MCF 10A (cell line): ENCODE measurements at regions of chr18 and their contacts with region 1.

Region 1: DNA sequence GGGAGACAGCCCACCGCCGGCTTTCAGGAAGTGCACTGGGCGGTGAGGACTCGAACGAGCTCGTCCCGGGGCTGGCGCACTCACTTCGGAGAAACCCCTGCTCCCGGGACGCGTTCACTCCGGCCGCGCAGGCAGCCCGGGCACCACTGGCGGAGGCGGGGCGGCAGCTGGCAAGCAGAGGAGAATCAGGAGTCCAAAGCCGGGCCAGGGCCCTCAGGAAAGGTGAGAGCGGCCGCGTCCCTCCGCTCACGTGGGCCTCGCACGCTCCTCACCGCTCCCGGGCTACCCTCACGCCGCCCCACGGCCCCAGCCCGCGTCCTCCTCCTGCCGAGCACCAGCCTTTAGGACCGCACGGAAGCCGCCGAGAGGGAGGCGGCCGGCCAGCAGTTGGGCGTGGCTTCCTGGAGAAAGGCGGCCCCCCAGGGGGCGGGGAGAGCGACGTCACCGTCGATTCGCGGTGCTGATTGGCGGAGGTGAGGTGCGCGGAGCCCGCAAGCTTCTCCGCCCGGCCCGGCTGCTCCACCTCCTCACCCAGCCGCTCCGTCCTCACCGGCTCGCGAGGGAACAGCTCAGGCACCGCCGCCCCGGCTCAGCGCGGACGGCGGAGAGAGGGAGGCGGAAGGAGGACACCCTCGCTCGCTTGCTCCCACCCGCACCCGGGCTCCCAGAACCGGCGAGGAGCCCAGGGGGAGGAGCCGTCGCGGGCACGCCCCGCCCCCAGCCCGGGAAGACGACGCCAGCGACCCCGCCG is at the start of gene ZCCHC2:
- DNase-seq: peak; percentile 96
- H3K4me3 Mint-ChIP-seq: peak within 1 kb of the TSS; percentile 76
- H3K27ac Mint-ChIP-seq: peak within 1 kb of the TSS; percentile 58
- H3K4me1 Mint-ChIP-seq: peaks cover 13% of the 10 kb centered on the region
- H3K27me3 Mint-ChIP-seq: no peaks in the 10 kb centered on the region
- CTCF ChIP-seq: no peak
- total RNA-seq, gene ZCCHC2: 14.6 and 15.0 TPM in 2 replicates

Region 2: DNA sequence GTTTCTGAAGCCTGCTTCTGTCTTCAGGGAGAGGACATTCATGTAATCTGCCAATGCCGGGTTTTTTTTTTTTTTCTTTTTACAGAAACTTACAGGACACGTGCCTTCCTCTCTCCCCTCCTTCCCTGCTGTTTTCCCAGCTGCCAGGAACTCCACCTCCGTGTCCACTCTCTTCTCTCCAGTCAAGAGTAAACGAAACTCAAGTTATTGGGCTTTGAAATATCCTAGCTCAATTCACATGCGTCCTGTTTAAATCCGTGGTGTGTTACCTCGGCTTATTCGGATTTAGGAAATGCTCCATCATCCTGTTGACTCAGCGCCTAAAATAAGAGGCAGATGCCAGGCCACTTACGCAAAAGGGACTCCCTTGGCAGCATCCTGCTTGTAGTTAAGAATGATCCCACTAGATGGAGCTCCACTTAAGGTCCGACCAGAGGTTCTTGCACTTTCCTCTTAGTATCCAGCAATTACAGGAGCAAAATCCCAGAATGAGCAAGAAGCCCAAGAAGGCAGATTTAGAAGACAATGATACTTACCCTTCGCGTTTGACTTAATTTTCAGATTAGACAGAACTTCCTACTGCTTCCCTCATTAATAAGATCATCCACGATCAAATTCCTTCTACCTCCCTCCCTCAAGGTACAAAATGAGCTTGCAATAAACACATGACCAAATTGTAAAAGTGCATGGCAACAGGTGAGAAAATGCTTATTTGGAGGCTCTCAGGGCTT is 97.0 kb before region 1 on chr18:
- CTCF ChIA-PET with region 1: interaction called, 14 read pairs
- POLR2A ChIA-PET with region 1: interaction called, 78 read pairs
- intact Hi-C with region 1: loop called (anchors 1 kb)
- DNase-seq: peak; percentile 97
- H3K4me3 Mint-ChIP-seq: peak overlapping the region; percentile 65
- H3K27ac Mint-ChIP-seq: peak overlapping the region; percentile 90
- H3K4me1 Mint-ChIP-seq: peaks cover 21% of the 10 kb centered on the region
- H3K27me3 Mint-ChIP-seq: no peaks in the 10 kb centered on the region
- CTCF ChIP-seq: peak; percentile 91

Region 3: DNA sequence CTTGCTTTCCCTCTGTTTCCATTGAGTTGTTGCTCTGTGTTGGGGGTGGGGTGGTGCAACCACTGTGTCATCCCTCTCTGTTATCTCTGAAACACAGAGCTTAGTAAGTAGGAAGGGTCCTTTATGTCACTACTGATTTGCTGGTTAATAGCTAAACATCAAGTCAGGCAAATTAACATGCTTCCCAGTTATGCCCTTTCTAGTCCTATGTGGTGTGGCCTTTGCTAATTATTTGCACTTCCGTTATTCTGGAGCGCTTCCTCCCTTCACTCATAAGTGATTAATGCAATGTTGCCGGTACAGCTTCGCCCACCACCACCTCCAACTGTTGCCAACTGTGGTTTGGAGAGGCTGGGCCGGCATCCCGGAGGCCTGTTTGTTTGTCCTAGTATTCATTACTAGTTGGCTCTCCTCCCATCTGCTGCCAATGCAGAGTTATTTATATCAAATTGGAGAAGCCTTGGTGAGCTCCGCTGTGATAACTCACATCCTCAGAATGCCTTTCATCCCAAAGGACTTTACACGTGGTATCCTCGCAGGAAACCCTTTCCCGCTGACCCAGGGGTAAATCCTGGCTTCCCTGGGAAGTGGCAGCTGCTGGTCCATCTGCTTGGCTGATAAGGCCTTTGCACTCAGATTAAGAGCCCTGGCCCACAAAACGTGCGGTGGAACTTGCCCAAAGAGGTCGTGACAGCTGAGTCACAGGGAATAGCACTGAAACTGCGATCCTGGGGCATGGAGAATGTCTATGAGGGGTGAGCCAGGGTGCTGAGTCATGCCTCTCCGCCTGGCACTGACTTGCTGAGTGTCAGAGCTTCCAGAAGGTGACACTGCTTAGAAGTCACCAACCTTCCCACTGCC is 71.9 kb before region 1 on chr18:
- CTCF ChIA-PET with region 1: interaction called, 3 read pairs
- POLR2A ChIA-PET with region 1: interaction called, 49 read pairs
- intact Hi-C with region 1: no loop called
- DNase-seq: peak; percentile 91
- H3K4me3 Mint-ChIP-seq: peak overlapping the region; percentile 30
- H3K27ac Mint-ChIP-seq: peak overlapping the region; percentile 67
- H3K4me1 Mint-ChIP-seq: peaks cover 29% of the 10 kb centered on the region
- H3K27me3 Mint-ChIP-seq: no peaks in the 10 kb centered on the region
- CTCF ChIP-seq: no peak

Region 4: DNA sequence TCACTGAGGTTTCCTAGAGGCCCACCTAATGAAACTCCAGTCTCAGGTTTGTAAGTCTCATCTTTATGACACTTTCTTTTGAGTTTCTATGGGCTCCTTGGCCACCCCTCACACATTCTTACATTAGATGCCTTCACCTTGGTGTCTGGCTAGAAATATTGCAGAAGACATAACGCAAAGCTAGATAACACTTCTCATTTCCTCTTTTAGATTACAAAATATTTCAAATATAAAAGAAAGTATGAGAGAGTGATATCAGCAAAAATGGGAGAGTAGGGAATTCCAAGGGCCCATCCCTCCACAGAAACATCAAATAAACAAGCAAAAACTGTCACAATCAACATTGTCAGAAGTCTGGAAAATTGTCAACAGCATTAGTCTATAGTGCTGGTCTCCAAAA is 43.1 kb before region 1 on chr18:
- CTCF ChIA-PET with region 1: no interaction called
- POLR2A ChIA-PET with region 1: interaction called, 13 read pairs
- intact Hi-C with region 1: no loop called
- DNase-seq: no peak
- H3K4me3 Mint-ChIP-seq: no peak overlapping the region
- H3K27ac Mint-ChIP-seq: no peak overlapping the region
- H3K4me1 Mint-ChIP-seq: peaks cover under 1% of the 10 kb centered on the region
- H3K27me3 Mint-ChIP-seq: no peaks in the 10 kb centered on the region
- CTCF ChIP-seq: no peak

Region 5: DNA sequence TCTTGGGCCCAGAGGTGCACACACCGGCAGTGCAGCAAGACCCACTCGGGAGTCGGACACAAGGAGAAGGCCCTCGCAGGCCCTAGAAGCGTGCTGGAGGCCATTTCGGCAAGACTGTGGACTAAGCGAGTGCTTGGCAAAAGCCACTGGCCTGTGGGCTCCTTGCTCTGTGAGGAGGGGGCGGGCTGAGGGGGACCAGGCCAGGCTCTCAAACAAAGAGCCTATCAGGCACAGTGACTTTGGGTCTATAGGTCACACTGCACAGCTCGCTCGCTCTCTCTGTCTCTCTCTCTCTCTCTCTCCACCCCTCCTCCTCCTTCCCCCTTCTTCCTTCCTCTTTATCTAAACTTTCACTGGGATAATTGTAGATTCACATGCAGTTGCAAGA is 23.4 kb before region 1 on chr18:
- CTCF ChIA-PET with region 1: no interaction called
- POLR2A ChIA-PET with region 1: interaction called, 10 read pairs
- intact Hi-C with region 1: no loop called
- DNase-seq: no peak
- H3K4me3 Mint-ChIP-seq: no peak overlapping the region
- H3K27ac Mint-ChIP-seq: no peak overlapping the region
- H3K4me1 Mint-ChIP-seq: no peaks in the 10 kb centered on the region
- H3K27me3 Mint-ChIP-seq: no peaks in the 10 kb centered on the region
- CTCF ChIP-seq: no peak

Region 6: DNA sequence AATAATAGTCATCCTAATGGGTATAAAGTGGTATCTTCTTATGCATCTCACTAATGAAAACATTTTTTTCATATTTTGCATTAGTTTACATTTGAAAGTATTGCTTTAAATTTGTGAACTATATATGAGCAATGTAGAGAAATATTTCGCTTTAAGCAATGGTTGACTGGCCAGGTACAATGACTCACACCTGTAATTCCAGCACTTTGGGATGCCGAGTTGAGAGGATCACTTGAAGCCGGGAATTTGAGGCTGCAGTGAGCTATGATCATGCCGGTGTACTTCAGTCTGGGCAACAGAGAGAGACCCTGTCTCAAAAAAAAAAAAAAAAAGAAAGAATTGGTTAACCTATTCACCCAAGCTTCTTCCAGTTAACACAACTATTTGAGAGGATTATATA is 15.3 kb after region 1 on chr18:
- CTCF ChIA-PET with region 1: interaction called, 4 read pairs
- POLR2A ChIA-PET with region 1: interaction called, 84 read pairs
- intact Hi-C with region 1: no loop called
- DNase-seq: peak; percentile 63
- H3K4me3 Mint-ChIP-seq: no peak overlapping the region
- H3K27ac Mint-ChIP-seq: no peak overlapping the region
- H3K4me1 Mint-ChIP-seq: no peaks in the 10 kb centered on the region
- H3K27me3 Mint-ChIP-seq: no peaks in the 10 kb centered on the region
- CTCF ChIP-seq: no peak